ENCODE measurements at regions of chr1 and their contacts with region 1.

Region 1: GRCh38 chr1:169711469-169712281 is at the start of gene SELL:
- DNase-seq: peak; percentile 84
- H3K4me3 Mint-ChIP-seq: peak within 1 kb of the TSS; percentile 41
- H3K27ac Mint-ChIP-seq: peak within 1 kb of the TSS; percentile 19
- H3K4me1 Mint-ChIP-seq: peaks cover 10% of the 10 kb centered on the region
- H3K27me3 Mint-ChIP-seq: peaks cover 11% of the 10 kb centered on the region
- CTCF ChIP-seq: peak; percentile 85
- total RNA-seq, gene SELL: 6.2 and 12.1 TPM in 2 replicates

Region 2: GRCh38 chr1:169586395-169587255 is 125.0 kb before region 1 on chr1 and contains the start of gene F5:
- CTCF ChIA-PET with region 1: interaction called, 20 read pairs
- intact Hi-C with region 1: loop called (anchors 1 kb)
- DNase-seq: peak; percentile 91
- H3K4me3 Mint-ChIP-seq: peak within 1 kb of the TSS; percentile 78
- H3K27ac Mint-ChIP-seq: peak within 1 kb of the TSS; percentile 83
- H3K4me1 Mint-ChIP-seq: peaks cover 35% of the 10 kb centered on the region
- H3K27me3 Mint-ChIP-seq: no peaks in the 10 kb centered on the region
- CTCF ChIP-seq: peak; percentile 51
- total RNA-seq, gene F5: 8.1 and 16.2 TPM in 2 replicates

Region 3: DNA sequence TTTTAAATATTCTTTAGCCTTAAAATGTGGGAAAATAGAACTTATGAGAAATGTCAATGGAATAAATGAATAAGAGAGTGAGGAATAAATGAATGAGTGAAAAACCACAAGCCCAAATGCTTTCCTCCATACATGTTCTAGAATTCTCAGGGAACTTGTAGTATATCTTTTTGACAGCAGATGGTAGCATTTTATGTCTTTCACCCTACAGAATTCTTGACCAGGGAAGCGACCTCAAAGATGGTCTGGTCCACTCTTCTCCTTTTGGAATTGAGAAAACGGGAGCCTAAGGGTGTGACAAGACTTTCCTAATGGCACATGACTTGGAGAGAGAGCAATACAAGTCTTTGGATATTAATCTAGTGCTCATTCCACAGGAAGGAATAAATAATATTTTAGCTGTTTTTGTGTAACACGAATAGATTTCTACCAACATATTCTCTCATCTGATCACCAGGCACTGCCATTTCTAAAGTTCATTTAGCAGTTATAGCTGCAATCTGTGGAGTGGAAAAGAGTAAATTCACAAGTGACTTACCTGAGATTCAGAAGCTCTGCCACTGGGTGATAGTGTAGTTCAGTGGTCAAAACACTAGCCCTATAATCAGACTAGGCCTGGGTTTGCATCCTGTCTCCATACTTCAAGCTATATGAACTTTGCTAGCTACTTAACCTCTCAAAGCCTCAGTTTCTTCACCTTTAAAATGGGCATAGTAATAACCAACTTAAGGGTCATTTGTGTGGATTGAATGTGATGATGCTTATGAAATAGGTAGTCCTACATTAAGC is 110.4 kb before region 1 on chr1:
- CTCF ChIA-PET with region 1: interaction called, 41 read pairs
- intact Hi-C with region 1: loop called (anchors 1 kb)
- DNase-seq: no peak
- H3K4me3 Mint-ChIP-seq: no peak overlapping the region
- H3K27ac Mint-ChIP-seq: no peak overlapping the region
- H3K4me1 Mint-ChIP-seq: peaks cover 22% of the 10 kb centered on the region
- H3K27me3 Mint-ChIP-seq: no peaks in the 10 kb centered on the region
- CTCF ChIP-seq: peak; percentile 46

Region 4: GRCh38 chr1:169794530-169795416 is 83.1 kb after region 1 on chr1 and contains the start of gene METTL18:
- CTCF ChIA-PET with region 1: interaction called, 10 read pairs
- intact Hi-C with region 1: loop called (anchors 5 kb)
- DNase-seq: peak; percentile 94
- H3K4me3 Mint-ChIP-seq: peak within 1 kb of the TSS; percentile 93
- H3K27ac Mint-ChIP-seq: peak within 1 kb of the TSS; percentile 93
- H3K4me1 Mint-ChIP-seq: peaks cover 31% of the 10 kb centered on the region
- H3K27me3 Mint-ChIP-seq: no peaks in the 10 kb centered on the region
- CTCF ChIP-seq: no peak
- total RNA-seq, gene METTL18: 11.2 and 13.3 TPM in 2 replicates

Region 5: DNA sequence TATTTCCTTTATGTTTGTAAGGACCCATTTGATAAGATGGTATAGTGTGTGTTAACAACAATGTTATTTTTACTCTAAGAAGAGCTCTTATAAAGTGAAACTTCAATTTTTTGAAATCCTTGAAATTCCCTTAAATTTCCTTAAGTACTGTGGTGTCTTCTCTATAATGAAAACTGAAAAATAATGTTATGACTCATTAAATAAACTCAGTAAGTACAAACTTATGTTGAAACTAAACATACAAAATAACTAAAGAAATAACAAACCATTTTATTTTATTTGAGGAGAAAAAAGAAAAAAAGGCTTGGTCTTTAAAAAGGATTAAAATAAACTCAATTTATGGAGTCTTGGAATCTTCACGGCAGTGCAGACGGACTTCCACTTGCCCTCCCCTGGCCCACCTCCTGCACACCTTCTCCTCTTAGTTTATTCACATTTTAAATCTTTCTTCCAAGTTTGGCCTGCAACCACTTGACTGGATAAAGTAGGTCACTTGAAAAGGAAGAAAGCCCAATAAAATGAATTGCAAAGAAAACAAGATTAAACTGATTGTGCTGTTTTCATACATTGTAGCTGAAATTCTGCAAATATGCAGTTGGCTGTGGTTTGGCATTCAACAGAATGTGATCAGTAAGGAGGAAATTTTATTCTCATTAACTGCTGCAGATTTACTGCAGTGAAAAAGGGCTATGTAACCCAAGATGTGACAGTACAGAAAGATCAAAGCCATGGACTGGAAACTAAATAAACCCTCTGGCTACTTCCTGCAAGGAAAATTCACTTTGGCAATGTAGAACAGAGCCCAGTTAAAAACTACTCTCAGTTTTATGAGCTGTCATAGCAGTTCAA is 230.5 kb after region 1 on chr1:
- CTCF ChIA-PET with region 1: no interaction called
- intact Hi-C with region 1: no loop called
- DNase-seq: no peak
- H3K4me3 Mint-ChIP-seq: no peak overlapping the region
- H3K27ac Mint-ChIP-seq: no peak overlapping the region
- H3K4me1 Mint-ChIP-seq: no peaks in the 10 kb centered on the region
- H3K27me3 Mint-ChIP-seq: no peaks in the 10 kb centered on the region
- CTCF ChIP-seq: no peak